ENCODE measurements at regions of chr1 and their contacts with region 1.

Region 1: GRCh38 chr1:109802901-109803561 is 39.3 kb upstream of the EPS8L3 start:
- DNase-seq: peak in 1 of 2 donors; percentile 3
- H3K4me3 ChIP-seq: no peak overlapping the region
- H3K27ac ChIP-seq: peak overlapping the region in 1 of 2 donors; percentile 43
- H3K4me1 ChIP-seq: peaks cover 0 to 5% of the 10 kb centered on the region in 2 donors
- H3K27me3 ChIP-seq: no peaks in the 10 kb centered on the region
- CTCF ChIP-seq: no peak
- POLR2A ChIP-seq: no peak

Region 2: GRCh38 chr1:109598655-109599054 is 204.4 kb before region 1 on chr1:
- intact Hi-C with region 1: no loop called
- DNase-seq: no peak
- H3K4me3 ChIP-seq: no peak overlapping the region
- H3K27ac ChIP-seq: no peak overlapping the region
- H3K4me1 ChIP-seq: no peaks in the 10 kb centered on the region
- H3K27me3 ChIP-seq: no peaks in the 10 kb centered on the region
- CTCF ChIP-seq: no peak
- POLR2A ChIP-seq: no peak

Region 3: DNA sequence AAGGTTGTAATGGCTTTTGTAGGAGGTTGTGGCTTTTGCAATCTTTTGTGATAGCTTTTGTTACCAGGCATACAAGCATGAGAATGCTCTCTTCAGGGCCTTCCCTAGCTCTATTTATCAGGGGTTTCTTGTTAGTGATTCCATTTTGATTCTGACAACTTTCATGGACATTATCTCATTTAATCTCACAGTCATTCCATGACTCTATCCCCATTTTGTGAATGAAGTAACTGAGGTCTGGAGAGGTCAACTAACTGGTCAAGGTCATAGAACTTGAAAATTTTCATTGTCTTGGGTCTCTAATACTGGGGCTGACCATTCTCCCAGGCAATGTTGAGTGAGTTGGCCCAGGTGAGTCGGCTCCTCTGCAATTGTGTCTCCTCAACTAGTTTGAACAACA is 615.7 kb after region 1 on chr1:
- intact Hi-C with region 1: loop called (anchors 5 kb)
- DNase-seq: no peak
- H3K4me3 ChIP-seq: no peak overlapping the region
- H3K27ac ChIP-seq: no peak overlapping the region
- H3K4me1 ChIP-seq: no peaks in the 10 kb centered on the region
- H3K27me3 ChIP-seq: no peaks in the 10 kb centered on the region
- CTCF ChIP-seq: no peak
- POLR2A ChIP-seq: no peak

Measured in breast epithelium (tissue), 4 donors.